Esophagus squamous epithelium (tissue), 5 donors: ENCODE measurements at regions of chr6 and their contacts with region 1.

Region 1: DNA sequence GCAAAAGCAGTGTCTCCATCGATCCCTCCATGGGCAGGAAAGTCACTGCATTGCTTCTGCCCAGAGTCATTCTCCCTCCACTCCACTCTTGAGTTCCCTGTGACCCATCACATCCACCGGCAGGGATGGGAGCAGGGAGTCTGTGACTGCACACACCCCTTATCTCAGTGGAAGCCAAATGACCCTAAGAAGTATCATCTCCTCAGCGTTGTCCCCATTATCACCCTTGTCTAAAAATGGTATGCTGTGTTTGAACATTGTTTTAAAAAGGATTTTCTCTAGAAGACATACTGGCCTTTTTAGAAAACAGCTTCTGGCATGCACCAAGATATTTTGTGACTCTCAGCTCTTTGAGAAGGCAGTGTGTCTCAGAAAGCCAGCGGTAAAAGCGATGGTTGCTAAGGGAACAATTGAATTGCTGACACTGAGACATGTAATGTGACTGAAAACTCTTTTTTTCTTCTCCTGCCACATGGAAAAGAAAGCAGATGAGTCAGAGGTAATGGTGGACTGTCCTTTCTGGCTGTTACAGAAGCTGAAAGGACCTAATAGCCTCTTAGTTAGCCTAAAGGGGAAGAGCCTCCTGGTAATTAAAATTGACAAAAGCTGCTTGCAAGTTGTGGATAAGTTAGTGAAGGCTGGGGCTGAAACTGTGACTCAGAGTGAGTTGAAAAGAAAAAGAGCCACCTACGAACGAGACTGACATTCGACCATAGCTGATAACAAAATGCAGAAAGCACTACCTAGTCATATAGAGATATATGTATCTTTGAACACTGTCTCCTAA is 120.5 kb downstream of the MAP3K7 start:
- DNase-seq: no peak
- H3K4me3 ChIP-seq: no peak overlapping the region
- H3K27ac ChIP-seq: no peak overlapping the region
- H3K4me1 ChIP-seq: peaks cover 0 to 16% (median 0%) of the 10 kb centered on the region in 3 donors
- H3K27me3 ChIP-seq: no peaks in the 10 kb centered on the region
- CTCF ChIP-seq: no peak
- POLR2A ChIP-seq: no peak

Region 2: DNA sequence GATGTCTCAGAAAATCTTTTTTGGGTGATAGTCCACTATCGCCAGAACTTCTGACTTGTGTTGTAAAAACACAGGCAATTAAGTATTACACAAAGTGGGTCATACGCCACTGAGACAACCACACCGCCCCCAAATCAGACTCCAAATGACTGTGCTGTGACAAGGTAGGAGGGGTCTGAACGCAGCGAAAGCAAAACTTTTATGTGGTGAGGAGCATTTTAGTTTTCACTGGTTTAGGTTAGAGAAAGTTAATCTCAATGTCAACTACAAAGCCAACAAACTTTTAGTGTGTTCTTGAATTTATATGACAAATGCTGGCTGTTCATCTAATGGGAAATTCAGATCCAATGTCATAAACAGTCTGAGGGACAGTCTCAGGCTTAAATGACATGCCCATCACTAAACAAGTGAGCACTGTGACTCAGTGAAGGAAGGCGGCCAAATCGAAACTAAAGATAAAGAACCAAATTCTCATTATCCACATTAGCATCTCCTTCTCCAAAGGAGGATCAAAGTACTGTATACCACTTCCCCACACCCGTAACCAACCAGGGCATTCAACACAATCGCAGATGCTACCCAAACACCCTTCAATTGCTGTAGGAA is 385.4 kb before region 1 on chr6:
- intact Hi-C with region 1: loop called (anchors 10 kb)
- DNase-seq: no peak
- H3K4me3 ChIP-seq: peak overlapping the region in 1 of 4 donors; percentile 19
- H3K27ac ChIP-seq: no peak overlapping the region
- H3K4me1 ChIP-seq: no peaks in the 10 kb centered on the region
- H3K27me3 ChIP-seq: no peaks in the 10 kb centered on the region
- CTCF ChIP-seq: no peak
- POLR2A ChIP-seq: no peak

Region 3: DNA sequence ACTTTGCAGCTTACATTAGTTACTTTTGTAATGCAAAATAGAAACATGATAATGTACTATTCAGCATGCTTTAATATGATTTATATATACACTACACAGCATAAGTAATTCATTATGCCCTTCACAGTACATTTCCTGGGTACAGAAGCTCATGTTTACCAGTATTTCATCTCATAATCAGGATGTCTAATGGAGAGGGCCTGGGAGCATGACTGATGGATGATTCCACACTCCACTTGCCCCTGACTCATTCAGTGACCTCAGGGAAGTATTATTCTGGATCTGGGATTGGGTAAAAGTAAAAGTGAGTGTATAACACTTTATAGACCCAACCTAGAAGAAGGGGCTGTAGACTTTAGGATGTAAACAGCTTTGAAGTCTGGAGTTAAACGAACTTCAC is 138.3 kb before region 1 on chr6:
- intact Hi-C with region 1: no loop called
- DNase-seq: no peak
- H3K4me3 ChIP-seq: no peak overlapping the region
- H3K27ac ChIP-seq: no peak overlapping the region
- H3K4me1 ChIP-seq: no peaks in the 10 kb centered on the region
- H3K27me3 ChIP-seq: no peaks in the 10 kb centered on the region
- CTCF ChIP-seq: no peak
- POLR2A ChIP-seq: no peak

Region 4: DNA sequence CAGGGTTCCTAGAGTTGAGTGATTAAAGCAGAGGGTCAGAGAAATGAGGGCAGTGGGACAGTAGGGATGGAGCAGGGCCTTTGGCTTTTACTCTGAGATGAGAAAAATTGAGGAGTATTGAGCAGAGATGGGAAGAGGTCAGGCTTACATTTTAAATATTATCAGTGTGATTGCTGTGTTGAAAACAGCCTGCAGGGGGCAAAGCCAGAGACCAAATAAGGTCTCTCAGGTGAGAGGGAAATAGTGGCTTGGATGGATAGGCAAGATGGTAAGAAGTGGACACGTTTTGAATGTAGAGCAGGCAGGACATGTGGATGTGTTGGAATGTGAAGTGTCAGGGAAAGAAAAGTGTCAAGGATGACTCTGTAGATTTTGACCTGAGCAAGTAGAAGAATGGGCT is 225.5 kb after region 1 on chr6:
- intact Hi-C with region 1: no loop called
- DNase-seq: no peak
- H3K4me3 ChIP-seq: no peak overlapping the region
- H3K27ac ChIP-seq: no peak overlapping the region
- H3K4me1 ChIP-seq: no peaks in the 10 kb centered on the region
- H3K27me3 ChIP-seq: no peaks in the 10 kb centered on the region
- CTCF ChIP-seq: peak in 1 of 6 experiments; percentile 30
- POLR2A ChIP-seq: no peak